Activated B cell treated with CpG ODN at 0.5 μM for 24 hours (primary cell): ENCODE measurements at regions of chr1 and their contacts with region 1.

Region 1: GRCh38 chr1:183655562-183656075 is 2.5 kb upstream of the APOBEC4 start:
- DNase-seq: peak; percentile 52
- ATAC-seq: peak; percentile 82
- H3K4me3 Mint-ChIP-seq: no peak overlapping the region
- H3K27ac Mint-ChIP-seq: no peak overlapping the region
- H3K4me1 Mint-ChIP-seq: peaks cover 3% of the 10 kb centered on the region
- H3K27me3 Mint-ChIP-seq: peaks cover 4% of the 10 kb centered on the region
- CTCF ChIP-seq: peak; percentile 37

Region 2: DNA sequence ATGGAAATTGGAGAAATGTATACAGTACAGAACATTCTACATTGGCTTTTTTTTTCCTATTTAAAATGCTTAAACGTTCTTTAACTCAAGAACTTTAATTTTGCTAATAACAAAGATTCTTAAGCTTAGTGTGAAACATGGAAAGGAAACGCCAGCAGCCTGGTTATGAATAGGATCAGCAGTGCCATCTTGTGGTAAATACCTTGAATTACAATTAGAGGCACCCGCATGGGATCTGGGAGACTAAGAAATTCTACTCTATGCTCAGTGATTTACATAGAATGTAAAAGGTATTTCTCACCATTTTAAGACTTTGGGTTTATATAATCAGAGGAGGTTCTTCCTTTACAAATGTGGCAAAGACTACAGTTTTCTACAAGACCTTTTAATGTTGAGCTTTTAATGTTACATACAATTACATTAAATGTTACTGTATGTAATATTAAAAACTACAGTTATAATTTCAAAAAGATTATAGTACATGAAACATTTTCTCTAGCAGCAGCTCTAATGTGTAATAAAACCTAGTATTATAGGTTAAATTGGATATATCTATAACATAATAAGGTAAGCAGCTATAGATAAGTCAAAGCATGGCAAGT is 29.6 kb after region 1 on chr1:
- CTCF ChIA-PET with region 1: interaction called, 55 read pairs
- POLR2A ChIA-PET with region 1: interaction called, 3 read pairs
- intact Hi-C with region 1: loop called (anchors 1 kb)
- DNase-seq: no peak
- ATAC-seq: peak; percentile 61
- H3K4me3 Mint-ChIP-seq: no peak overlapping the region
- H3K27ac Mint-ChIP-seq: no peak overlapping the region
- H3K4me1 Mint-ChIP-seq: peaks cover 8% of the 10 kb centered on the region
- H3K27me3 Mint-ChIP-seq: peaks cover 25% of the 10 kb centered on the region
- CTCF ChIP-seq: no peak

Region 3: DNA sequence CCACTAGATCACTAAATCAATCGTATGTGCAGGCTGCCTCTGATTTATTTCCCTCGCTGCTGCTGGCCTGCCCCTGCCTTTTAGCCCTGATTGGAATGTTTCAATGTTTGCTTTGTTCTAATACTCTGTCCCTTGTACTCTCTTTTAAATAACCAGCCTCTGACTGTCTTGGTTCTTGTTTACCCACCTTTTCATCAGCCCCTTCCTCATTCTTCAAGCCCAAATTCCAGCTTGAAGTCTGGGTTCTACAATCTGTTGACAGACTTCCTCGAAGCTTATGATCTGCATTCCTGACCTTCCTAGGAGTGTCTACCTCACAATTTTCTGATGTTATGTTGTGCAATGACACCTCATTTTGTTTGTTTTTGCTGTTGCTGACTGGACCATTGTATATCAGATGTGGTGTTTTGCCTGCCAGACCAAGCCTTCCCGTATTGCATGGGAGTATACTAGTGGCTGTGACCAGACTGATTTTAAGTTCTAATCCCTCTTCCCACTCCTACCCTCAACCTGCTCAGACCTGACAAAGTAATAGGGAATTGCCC is 44.1 kb after region 1 on chr1:
- CTCF ChIA-PET with region 1: no interaction called
- POLR2A ChIA-PET with region 1: no interaction called
- intact Hi-C with region 1: no loop called
- DNase-seq: no peak
- ATAC-seq: no peak
- H3K4me3 Mint-ChIP-seq: no peak overlapping the region
- H3K27ac Mint-ChIP-seq: no peak overlapping the region
- H3K4me1 Mint-ChIP-seq: peaks cover 3% of the 10 kb centered on the region
- H3K27me3 Mint-ChIP-seq: no peaks in the 10 kb centered on the region
- CTCF ChIP-seq: no peak

Region 4: GRCh38 chr1:183922197-183922596 is 266.6 kb after region 1 on chr1:
- CTCF ChIA-PET with region 1: interaction called, 284 read pairs
- POLR2A ChIA-PET with region 1: no interaction called
- intact Hi-C with region 1: no loop called
- DNase-seq: no peak
- ATAC-seq: no peak
- H3K4me3 Mint-ChIP-seq: no peak overlapping the region
- H3K27ac Mint-ChIP-seq: no peak overlapping the region
- H3K4me1 Mint-ChIP-seq: no peaks in the 10 kb centered on the region
- H3K27me3 Mint-ChIP-seq: peaks cover 2% of the 10 kb centered on the region
- CTCF ChIP-seq: no peak

Region 5: DNA sequence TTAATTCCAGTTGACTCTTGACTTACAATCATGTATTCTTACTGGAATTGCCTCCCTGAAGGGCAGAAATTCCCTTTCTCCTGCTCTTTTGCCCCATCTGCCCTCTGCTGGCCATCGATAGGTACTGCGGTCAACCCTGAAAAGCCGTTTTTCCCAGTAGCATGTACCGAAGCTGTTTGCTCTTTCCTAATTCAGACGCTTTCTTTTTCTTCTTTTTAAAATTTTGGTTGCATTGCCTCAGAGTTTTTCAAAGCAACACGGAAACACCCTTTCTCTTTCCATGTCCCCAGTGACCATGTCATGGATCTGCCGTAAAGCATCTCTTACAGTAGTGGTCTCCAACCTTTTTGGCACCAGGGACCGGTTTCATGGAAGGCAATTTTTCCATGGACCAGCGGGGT is 567.0 kb after region 1 on chr1:
- CTCF ChIA-PET with region 1: interaction called, 9 read pairs
- POLR2A ChIA-PET with region 1: no interaction called
- intact Hi-C with region 1: loop called (anchors 1 kb)
- DNase-seq: no peak
- ATAC-seq: no peak
- H3K4me3 Mint-ChIP-seq: no peak overlapping the region
- H3K27ac Mint-ChIP-seq: no peak overlapping the region
- H3K4me1 Mint-ChIP-seq: no peaks in the 10 kb centered on the region
- H3K27me3 Mint-ChIP-seq: no peaks in the 10 kb centered on the region
- CTCF ChIP-seq: no peak

Region 6: GRCh38 chr1:184691719-184692324 is 1036.2 kb after region 1 on chr1:
- CTCF ChIA-PET with region 1: no interaction called
- POLR2A ChIA-PET with region 1: no interaction called
- intact Hi-C with region 1: loop called (anchors 10 kb)
- DNase-seq: no peak
- ATAC-seq: no peak
- H3K4me3 Mint-ChIP-seq: no peak overlapping the region
- H3K27ac Mint-ChIP-seq: no peak overlapping the region
- H3K4me1 Mint-ChIP-seq: peaks cover 3% of the 10 kb centered on the region
- H3K27me3 Mint-ChIP-seq: no peaks in the 10 kb centered on the region
- CTCF ChIP-seq: no peak